CD8-positive, alpha-beta T cell (primary cell): ENCODE measurements at regions of chr11 and their contacts with region 1.

Region 1: DNA sequence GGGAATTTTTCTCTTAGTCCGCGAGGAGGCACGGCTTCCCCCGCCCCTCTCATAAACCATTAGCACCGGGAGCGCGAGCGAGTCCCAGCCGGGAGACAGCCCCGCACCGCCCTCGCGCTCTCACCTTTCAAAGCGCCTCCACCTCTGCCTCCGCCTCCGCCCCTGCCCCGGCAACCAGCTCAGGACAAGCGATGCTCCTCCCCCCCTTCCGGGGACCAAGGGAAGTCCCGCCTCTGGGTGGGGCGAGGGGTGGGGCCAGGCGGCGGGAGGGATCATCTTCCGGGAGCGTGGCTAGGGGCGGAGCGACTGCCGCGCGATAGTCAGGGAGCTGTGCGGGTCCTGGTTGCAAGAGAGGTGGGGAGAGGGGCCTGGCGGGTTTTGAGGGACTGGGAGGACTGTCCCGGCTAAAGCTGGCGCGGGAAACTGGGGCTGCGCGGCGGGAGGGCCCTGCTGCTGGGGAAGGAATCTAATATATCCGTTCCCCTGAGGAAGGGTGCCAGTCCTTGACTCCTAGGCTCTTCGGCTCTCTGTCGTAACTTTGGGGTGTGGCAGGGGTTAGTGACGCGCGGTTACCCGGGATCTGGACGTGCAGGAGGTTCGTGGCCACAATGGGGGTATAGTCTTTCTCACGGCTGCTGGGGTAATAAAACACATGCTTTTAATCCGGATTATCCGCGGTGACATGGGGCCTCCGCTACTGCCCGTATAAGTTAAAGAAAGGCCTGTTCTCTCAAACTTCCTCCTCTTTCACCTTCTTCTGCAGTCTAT is at the starts of genes CCDC82 and JRKL:
- DNase-seq: peak; percentile 96 to 99 (median 98)
- ATAC-seq: peak; percentile 97
- H3K4me3 ChIP-seq: peak within 1 kb of the TSS; percentile 87 to 93
- H3K4me3 Mint-ChIP-seq: peak within 1 kb of the TSS; percentile 94
- H3K27ac ChIP-seq: peak within 1 kb of the TSS; percentile 78 to 79
- H3K27ac Mint-ChIP-seq: peak within 1 kb of the TSS; percentile 96
- H3K4me1 ChIP-seq: peaks cover 15% of the 10 kb centered on the region
- H3K4me1 Mint-ChIP-seq: peaks cover 52% of the 10 kb centered on the region
- H3K27me3 ChIP-seq: no peaks in the 10 kb centered on the region
- H3K27me3 Mint-ChIP-seq: no peaks in the 10 kb centered on the region
- CTCF ChIP-seq: no peak
- total RNA-seq, gene CCDC82: 20.0 to 23.0 TPM
- total RNA-seq, gene JRKL: 2.5 to 2.6 TPM

Region 2: DNA sequence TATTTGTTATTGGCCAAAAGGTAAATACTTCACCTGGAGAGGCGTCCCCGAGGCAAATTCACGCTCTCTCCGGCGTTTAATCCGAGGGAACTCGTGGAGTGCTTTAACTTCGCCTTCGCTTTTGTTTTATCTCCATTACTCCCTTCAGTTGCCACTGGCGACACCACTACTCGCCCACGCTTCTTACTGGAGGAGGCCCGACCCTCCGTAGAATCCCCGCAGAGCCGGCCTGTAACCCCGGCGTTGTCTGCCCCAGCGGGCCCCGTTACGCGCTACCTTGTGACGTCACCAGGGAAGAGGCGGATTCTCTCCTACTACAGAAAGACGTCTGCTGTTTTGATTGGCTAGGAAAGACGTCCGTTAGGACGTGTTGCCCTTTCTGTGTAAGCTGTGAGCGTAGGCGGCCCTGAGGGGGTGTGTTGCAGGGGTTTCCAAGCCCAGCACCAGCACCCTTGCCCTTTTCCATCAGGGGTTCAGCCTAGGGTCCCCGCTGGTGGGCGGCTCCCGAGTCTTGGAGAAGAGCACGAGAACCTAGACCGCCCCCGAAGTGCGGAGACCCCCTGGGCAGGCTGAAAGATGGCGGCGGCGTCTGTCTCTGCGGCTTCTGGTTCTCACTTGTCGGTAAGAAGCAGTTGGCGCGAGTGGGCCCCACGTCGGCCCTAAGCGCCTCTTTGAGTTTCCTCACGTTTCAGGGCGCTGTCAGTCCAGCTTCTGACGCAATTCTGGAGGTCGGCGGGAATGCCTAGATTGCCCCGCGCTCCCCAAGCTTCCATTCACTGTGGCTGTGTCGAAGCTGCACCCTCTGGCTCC is 599.6 kb before region 1 on chr11 and contains the start of gene CEP57:
- CTCF ChIA-PET with region 1: interaction called, 3 read pairs
- POLR2A ChIA-PET with region 1: interaction called, 25 read pairs
- intact Hi-C with region 1: loop called (anchors 1 kb)
- DNase-seq: peak; percentile 80 to 98 (median 94)
- ATAC-seq: peak; percentile 54
- H3K4me3 ChIP-seq: peak within 1 kb of the TSS; percentile 86 to 93
- H3K4me3 Mint-ChIP-seq: peak within 1 kb of the TSS; percentile 99
- H3K27ac ChIP-seq: peak within 1 kb of the TSS; percentile 99 to 100
- H3K27ac Mint-ChIP-seq: peak within 1 kb of the TSS; percentile 100
- H3K4me1 ChIP-seq: peaks cover 29% of the 10 kb centered on the region
- H3K4me1 Mint-ChIP-seq: peaks cover 63% of the 10 kb centered on the region
- H3K27me3 ChIP-seq: no peaks in the 10 kb centered on the region
- H3K27me3 Mint-ChIP-seq: no peaks in the 10 kb centered on the region
- CTCF ChIP-seq: no peak
- total RNA-seq, gene CEP57: 53.2 to 53.7 TPM

Region 3: DNA sequence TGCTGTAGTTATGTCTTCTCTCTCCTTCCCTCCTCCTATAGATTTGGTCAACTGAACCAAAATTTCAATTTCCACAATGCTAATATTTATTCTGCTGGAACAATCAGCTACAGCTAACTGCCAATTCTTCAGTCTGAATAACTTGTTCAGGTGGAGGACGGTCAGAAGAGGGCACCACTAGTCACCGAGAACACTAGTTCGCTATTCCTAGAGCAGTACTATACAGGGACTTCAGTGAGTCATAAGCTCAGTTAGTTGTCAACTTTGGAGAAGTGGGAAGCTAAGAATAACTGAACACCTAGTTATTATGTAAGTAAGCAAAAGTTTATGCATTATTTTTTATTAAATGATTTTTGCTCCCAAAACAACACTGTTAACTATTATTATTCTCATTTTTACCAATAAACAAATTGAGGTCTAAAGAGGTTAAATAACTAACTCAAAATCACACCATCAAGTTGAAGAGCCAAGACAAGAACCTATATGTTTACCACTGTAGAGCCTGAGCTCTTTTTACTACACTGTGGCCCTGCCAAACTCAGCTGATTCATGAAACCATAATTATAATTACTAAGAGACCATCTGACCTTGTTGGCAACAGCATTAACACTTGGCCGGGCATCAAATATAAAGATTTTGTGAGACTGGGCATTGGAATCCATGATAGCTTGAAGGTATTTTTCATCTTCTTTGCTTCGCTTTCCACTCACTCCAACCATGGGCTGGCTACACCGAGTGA is 540.6 kb before region 1 on chr11:
- CTCF ChIA-PET with region 1: interaction called, 16 read pairs
- POLR2A ChIA-PET with region 1: interaction called, 3 read pairs
- intact Hi-C with region 1: no loop called
- DNase-seq: peak in 4 of 9 experiments; percentile 5 to 39 (median 19)
- ATAC-seq: peak; percentile 38
- H3K4me3 ChIP-seq: no peak overlapping the region
- H3K4me3 Mint-ChIP-seq: no peak overlapping the region
- H3K27ac ChIP-seq: no peak overlapping the region
- H3K27ac Mint-ChIP-seq: no peak overlapping the region
- H3K4me1 ChIP-seq: no peaks in the 10 kb centered on the region
- H3K4me1 Mint-ChIP-seq: no peaks in the 10 kb centered on the region
- H3K27me3 ChIP-seq: no peaks in the 10 kb centered on the region
- H3K27me3 Mint-ChIP-seq: no peaks in the 10 kb centered on the region
- CTCF ChIP-seq: no peak

Region 4: DNA sequence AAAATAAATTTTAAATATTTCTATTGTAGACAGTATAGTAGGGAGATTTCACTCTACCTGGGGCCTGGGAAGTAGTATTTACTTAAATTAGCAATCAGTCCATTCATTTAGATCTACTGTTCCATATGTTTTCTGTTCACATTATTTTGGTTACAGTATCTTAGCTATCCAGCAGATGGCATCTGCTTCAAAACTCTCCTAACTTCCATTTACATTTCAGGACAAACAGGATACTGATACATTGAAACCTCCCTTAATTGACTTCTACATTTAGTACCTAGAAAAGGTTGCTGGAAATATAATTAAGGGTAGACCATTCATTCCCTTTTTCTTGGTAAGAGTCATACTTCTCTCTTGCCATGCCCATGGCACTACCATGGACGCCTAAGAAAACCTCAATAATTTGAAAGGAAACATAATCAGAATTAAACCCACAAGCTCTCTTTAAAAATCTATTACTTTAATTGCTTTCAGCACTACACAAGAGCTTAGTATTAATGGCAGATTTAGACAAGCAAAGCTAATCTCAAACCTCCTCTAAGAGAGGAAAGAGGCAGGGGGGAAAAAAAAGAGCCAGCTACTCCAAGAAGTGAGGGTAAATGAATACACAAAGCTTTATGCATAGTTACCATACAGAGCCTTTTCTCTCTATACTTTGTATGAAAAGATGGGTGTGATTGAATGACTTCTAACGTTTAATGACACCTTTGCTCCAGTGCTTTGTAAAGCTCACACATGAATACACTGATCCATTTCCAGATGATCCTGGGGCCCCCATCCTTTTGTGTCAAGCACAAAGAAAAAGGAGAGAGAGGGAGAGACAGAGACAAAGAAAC is 334.8 kb before region 1 on chr11:
- CTCF ChIA-PET with region 1: interaction called, 6 read pairs
- POLR2A ChIA-PET with region 1: interaction called, 4 read pairs
- intact Hi-C with region 1: loop called (anchors 2 kb)
- DNase-seq: peak in 2 of 9 experiments; percentile 43 to 58
- ATAC-seq: peak; percentile 59
- H3K4me3 ChIP-seq: no peak overlapping the region
- H3K4me3 Mint-ChIP-seq: no peak overlapping the region
- H3K27ac ChIP-seq: no peak overlapping the region
- H3K27ac Mint-ChIP-seq: peak overlapping the region; percentile 58
- H3K4me1 ChIP-seq: peaks cover 16% of the 10 kb centered on the region
- H3K4me1 Mint-ChIP-seq: peaks cover 57% of the 10 kb centered on the region
- H3K27me3 ChIP-seq: no peaks in the 10 kb centered on the region
- H3K27me3 Mint-ChIP-seq: no peaks in the 10 kb centered on the region
- CTCF ChIP-seq: peak; percentile 67

Region 5: DNA sequence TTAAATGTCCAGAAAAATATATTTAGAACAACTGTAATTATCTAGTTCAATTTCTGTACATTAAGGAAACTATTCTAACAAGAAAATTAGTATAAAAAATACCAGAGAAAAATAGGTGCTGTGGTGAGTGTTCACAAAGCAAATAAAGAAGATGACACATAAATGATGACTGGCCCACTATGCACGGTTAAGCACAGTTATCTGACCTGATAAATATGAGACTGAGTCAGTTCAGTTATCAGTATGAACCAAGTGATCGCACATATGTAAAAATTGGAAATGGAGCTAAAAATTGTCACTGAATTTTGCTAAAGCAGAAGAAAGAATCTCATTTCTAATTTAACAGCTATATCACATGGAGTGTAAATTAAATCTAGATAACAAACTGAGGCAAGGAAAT is 28.1 kb before region 1 on chr11:
- CTCF ChIA-PET with region 1: no interaction called
- POLR2A ChIA-PET with region 1: no interaction called
- intact Hi-C with region 1: no loop called
- DNase-seq: no peak
- ATAC-seq: no peak
- H3K4me3 ChIP-seq: no peak overlapping the region
- H3K4me3 Mint-ChIP-seq: no peak overlapping the region
- H3K27ac ChIP-seq: no peak overlapping the region
- H3K27ac Mint-ChIP-seq: no peak overlapping the region
- H3K4me1 ChIP-seq: peaks cover 5% of the 10 kb centered on the region
- H3K4me1 Mint-ChIP-seq: peaks cover 15% of the 10 kb centered on the region
- H3K27me3 ChIP-seq: no peaks in the 10 kb centered on the region
- H3K27me3 Mint-ChIP-seq: no peaks in the 10 kb centered on the region
- CTCF ChIP-seq: no peak